Naive thymus-derived CD8-positive, alpha-beta T cell (primary cell): ENCODE measurements at regions of chr15 and their contacts with region 1.

Region 1: GRCh38 chr15:55196458-55197361 is at the start of gene RSL24D1:
- DNase-seq: peak; percentile 88 to 99 (median 96)
- ATAC-seq: peak; percentile 95 to 97
- H3K4me3 Mint-ChIP-seq: no peak within 1 kb of the TSS
- H3K27ac Mint-ChIP-seq: no peak within 1 kb of the TSS
- H3K4me1 Mint-ChIP-seq: peaks cover 9 to 19% (median 13%) of the 10 kb centered on the region in 4 donors
- H3K27me3 Mint-ChIP-seq: no peaks in the 10 kb centered on the region
- polyA plus RNA-seq, gene RSL24D1: 78.8 to 116 (median 93.2) TPM

Region 2: GRCh38 chr15:55168329-55168974 is 28.3 kb before region 1 on chr15:
- POLR2A ChIA-PET with region 1: no interaction called
- DNase-seq: peak in 8 of 10 donors; percentile 18 to 44 (median 24)
- ATAC-seq: peak; percentile 62 to 70
- H3K4me3 Mint-ChIP-seq: no peak overlapping the region
- H3K27ac Mint-ChIP-seq: no peak overlapping the region
- H3K4me1 Mint-ChIP-seq: no peaks in the 10 kb centered on the region
- H3K27me3 Mint-ChIP-seq: no peaks in the 10 kb centered on the region

Region 3: DNA sequence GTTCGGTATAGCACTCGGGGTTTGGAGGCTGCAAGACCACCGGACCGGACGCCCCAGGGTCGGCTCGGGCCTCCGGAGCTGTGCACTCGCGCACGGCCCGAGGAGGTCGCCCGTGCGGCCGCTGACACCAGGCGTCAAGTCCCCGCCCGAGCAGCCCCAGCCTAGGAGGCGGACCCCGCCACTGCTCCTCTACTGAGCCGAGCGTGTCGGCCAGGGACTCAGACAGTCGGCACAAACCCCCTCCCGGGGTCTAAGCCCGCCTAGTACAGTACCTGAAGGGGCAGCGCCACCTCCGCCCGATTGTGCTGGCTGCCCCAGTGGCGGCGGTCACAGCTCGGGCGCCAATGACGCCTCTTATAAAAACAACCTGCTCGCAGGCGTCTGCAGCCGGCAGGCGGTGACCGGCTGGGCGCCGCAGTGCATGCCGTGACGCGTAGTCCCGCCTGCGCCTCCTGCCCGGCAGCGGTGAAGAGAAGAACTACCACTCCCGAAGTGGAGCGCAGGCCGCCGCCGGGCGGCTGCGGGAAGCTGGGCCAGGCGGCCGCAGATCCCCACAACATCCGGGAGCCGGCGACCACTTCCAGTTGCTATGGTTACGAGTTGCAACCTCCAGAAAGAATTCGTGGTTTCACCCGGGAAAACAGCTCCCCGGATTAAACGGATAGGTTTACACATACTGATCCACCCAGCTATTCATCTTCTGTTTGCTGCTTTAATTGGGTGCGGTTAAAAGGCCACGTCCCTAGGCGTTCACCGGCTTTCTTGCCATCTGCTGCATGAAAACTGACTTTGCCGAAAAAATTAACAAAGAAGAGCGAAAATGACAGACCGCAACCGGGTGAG is 211.5 kb after region 1 on chr15 and contains the starts of genes CCPG1 and PIERCE2:
- POLR2A ChIA-PET with region 1: interaction called, 18 read pairs
- DNase-seq: peak; percentile 76 to 91 (median 86)
- ATAC-seq: peak; percentile 90 to 92
- H3K4me3 Mint-ChIP-seq: peak within 1 kb of the TSS; percentile 85 to 97 (median 94)
- H3K27ac Mint-ChIP-seq: peak within 1 kb of the TSS; percentile 83 to 95 (median 94)
- H3K4me1 Mint-ChIP-seq: peaks cover 9 to 37% (median 33%) of the 10 kb centered on the region in 4 donors
- H3K27me3 Mint-ChIP-seq: no peaks in the 10 kb centered on the region
- polyA plus RNA-seq, gene CCPG1: 13.1 to 30.4 (median 29.2) TPM
- polyA plus RNA-seq, gene PIERCE2: 0.44 to 0.50 TPM in 2 of 3 donors, not detected in the other